Aorta (tissue), 5 donors: ENCODE measurements at regions of chr7 and their contacts with region 1.

Region 1: GRCh38 chr7:80781561-80781979 is 137.3 kb downstream of the SEMA3C start:
- DNase-seq: no peak
- ATAC-seq: peak; percentile 66
- H3K4me3 ChIP-seq: no peak overlapping the region
- H3K27ac ChIP-seq: no peak overlapping the region
- H3K4me1 ChIP-seq: peaks cover 6 to 7% of the 10 kb centered on the region in 2 donors
- H3K27me3 ChIP-seq: no peaks in the 10 kb centered on the region

Region 2: GRCh38 chr7:80732630-80733029 is 48.9 kb before region 1 on chr7:
- intact Hi-C with region 1: loop called in 1 of 2 experiments (anchors 5 kb)
- DNase-seq: no peak
- ATAC-seq: no peak
- H3K4me3 ChIP-seq: no peak overlapping the region
- H3K27ac ChIP-seq: no peak overlapping the region
- H3K4me1 ChIP-seq: peaks cover 0 to 3% of the 10 kb centered on the region in 2 donors
- H3K27me3 ChIP-seq: no peaks in the 10 kb centered on the region

Region 3: DNA sequence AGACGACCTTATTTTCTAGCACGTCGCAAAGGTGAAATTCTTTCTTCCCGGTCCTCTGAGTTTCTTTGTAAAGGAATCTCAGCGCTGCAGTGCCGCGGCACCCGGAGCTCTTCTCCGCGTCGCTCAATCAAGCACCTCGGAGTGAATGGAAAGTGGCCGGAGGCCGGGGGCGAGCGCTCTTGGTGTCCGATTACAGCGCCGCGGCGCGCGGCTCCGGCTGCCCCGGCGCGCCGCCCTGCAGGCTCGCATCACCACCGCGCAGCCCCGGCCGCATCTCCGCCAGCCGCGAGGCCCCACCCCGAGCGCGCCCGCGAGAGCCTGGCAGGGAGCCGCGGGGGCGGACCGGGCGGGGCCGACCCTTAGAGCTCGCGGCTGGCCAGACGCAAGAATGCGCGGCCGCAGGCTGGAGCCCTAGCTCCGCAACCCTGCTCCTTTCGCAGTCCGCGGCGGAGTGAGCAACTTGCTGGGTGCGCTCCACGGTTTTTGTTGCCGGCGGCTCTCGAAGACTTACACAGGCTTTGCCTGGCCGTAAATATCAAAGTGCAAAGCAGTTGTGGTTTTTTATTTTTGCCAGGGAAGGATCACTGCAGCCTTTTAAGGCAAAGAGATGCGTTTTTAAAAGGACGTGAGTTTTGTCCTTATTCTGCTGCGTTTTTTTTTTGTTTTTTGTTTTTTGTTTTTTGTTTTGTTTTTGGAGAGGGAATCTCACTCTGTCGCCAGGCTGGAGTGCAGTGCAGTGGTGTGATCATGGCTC is 137.5 kb after region 1 on chr7 and contains the start of gene SEMA3C:
- intact Hi-C with region 1: loop called in 1 of 2 experiments (anchors 10 kb)
- DNase-seq: peak; percentile 92 to 96
- ATAC-seq: peak; percentile 97
- H3K4me3 ChIP-seq: peak within 1 kb of the TSS; percentile 58 to 70
- H3K27ac ChIP-seq: peak within 1 kb of the TSS in 1 of 2 donors; percentile 1
- H3K4me1 ChIP-seq: no peaks in the 10 kb centered on the region
- H3K27me3 ChIP-seq: no peaks in the 10 kb centered on the region
- total RNA-seq, gene SEMA3C: 19.8 to 86.8 TPM

Region 4: GRCh38 chr7:81150951-81151361 is 369.4 kb after region 1 on chr7:
- intact Hi-C with region 1: no loop called
- DNase-seq: peak in 1 of 2 donors; percentile 30
- ATAC-seq: no peak
- H3K4me3 ChIP-seq: no peak overlapping the region
- H3K27ac ChIP-seq: no peak overlapping the region
- H3K4me1 ChIP-seq: no peaks in the 10 kb centered on the region
- H3K27me3 ChIP-seq: no peaks in the 10 kb centered on the region

Region 5: DNA sequence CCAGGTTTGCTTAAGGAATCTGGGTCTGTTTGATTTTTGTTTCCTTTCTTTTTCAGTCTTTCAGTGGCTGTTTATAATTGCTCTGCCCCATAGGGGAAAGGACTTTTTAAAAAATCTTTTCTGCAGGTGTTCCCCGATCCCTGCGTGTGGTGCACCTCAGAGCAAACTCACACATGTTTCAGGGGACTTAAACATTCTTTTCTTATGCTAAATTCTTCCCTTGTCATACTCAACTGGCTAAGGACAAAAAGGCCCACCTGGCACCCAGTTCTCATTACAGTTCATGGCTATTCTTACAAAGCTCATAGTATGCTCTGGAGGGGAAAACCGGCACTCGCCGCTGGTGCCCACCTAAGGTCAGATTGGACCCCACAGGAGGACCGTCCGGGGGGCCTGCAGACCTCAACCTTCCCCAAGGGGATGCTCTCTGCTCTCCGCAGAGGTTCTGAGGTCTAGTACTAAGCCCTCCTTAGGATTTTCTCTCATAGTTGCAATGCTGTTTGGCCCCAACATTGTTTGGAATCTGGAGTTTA is 768.0 kb after region 1 on chr7:
- intact Hi-C with region 1: no loop called
- DNase-seq: no peak
- ATAC-seq: no peak
- H3K4me3 ChIP-seq: no peak overlapping the region
- H3K27ac ChIP-seq: no peak overlapping the region
- H3K4me1 ChIP-seq: no peaks in the 10 kb centered on the region
- H3K27me3 ChIP-seq: no peaks in the 10 kb centered on the region